ENCODE measurements at regions of chr15 and their contacts with region 1.

Region 1: DNA sequence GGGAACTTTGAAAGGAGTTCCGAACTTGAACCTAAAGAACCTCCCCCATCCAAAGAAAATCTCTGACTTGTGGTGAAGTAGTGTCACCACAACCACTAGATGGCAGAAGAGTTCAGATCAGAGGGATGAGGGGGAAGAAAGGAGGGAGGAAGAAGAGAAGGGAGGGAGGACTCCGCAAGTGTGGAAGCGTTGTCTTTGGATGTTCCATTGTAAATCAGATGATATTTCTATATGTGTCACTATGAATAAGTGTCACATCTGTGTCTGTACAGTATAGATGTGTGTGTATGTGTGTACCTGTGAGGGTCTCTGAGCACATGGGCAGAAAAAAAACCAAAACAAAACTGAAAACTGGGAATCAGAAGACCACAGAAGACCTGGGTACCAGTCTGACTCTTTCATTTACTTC is 16.9 kb downstream of the SLC24A1 start:
- DNase-seq: peak in 1 of 5 donors; percentile 20
- ATAC-seq: peak; percentile 57 to 80 (median 76)
- H3K4me3 ChIP-seq: peak overlapping the region in 1 of 12 donors; percentile 10
- H3K27ac ChIP-seq: no peak overlapping the region
- H3K4me1 ChIP-seq: peaks cover 0 to 14% (median 7%) of the 10 kb centered on the region in 12 donors
- H3K27me3 ChIP-seq: no peaks in the 10 kb centered on the region
- CTCF ChIP-seq: peak; percentile 64 to 87 (median 74)
- POLR2A ChIP-seq: no peak

Region 2: DNA sequence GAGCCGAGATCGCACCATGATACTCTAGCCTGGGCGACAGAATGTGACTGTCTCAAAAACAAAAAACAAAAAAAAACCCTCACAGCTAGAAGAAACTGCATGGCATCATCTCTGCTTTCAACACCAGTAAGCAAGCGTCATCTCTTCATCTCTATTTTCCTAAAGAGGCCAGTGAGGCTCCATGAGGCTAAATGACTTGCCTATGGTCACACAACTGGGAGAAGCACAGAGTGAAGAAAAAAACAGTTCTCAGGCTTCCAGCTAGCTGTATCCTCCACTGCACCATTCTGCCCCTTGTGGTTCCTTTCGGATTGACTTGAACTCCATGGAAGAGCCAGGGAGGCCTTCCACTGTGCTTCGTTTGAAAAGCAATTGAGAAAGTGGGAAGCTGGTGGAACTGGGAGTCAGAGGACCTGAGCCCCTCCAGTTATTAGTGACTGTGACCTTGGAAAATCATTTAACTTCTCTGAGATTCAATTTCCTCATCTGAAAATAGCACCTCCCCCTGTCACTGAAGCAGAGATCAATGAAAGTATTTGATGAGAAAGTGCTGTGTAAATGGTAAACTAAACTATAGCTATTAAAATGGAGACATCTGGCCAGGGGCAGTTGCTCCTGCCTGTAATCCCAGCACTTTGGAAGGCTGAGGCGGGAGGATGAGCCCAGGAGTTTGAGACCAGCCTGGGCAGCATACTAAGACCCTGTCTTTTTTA is 185.5 kb after region 1 on chr15:
- intact Hi-C with region 1: loop called in 3 of 10 experiments (anchors 10 kb)
- DNase-seq: peak in 3 of 5 donors; percentile 36 to 55 (median 39)
- ATAC-seq: peak in 3 of 4 donors; percentile 81 to 97 (median 92)
- H3K4me3 ChIP-seq: no peak overlapping the region
- H3K27ac ChIP-seq: no peak overlapping the region
- H3K4me1 ChIP-seq: peaks cover 0 to 51% (median 0%) of the 10 kb centered on the region in 12 donors
- H3K27me3 ChIP-seq: no peaks in the 10 kb centered on the region
- CTCF ChIP-seq: peak; percentile 24 to 79 (median 52)
- POLR2A ChIP-seq: no peak

Region 3: GRCh38 chr15:65856821-65857455 is 218.3 kb after region 1 on chr15:
- intact Hi-C with region 1: loop called in 6 of 10 experiments (anchors 2 to 10 kb)
- DNase-seq: peak; percentile 47 to 73 (median 58)
- ATAC-seq: peak in 3 of 4 donors; percentile 42 to 61 (median 49)
- H3K4me3 ChIP-seq: no peak overlapping the region
- H3K27ac ChIP-seq: no peak overlapping the region
- H3K4me1 ChIP-seq: peaks cover 0 to 4% (median 0%) of the 10 kb centered on the region in 12 donors
- H3K27me3 ChIP-seq: no peaks in the 10 kb centered on the region
- CTCF ChIP-seq: peak; percentile 69 to 88 (median 80)
- POLR2A ChIP-seq: no peak

Region 4: DNA sequence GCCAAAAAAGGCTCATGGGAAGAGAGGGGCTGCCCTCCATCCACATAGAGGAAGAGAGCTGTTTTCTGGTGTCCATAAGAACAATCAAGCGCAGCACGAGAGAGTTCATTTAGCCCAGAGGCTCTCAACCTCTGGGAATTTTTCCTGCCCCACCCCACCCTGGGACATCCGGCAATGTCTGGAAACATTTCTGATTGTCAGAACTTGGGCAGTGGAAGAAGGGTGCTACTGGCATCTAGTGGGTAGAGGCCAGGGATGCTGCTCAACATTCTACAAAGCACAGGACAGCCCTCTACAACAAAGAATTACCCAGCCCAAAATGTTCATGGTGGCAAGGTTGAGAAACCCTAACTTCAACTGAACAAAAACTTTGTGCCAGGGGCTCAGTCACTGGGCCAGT is 323.5 kb after region 1 on chr15:
- intact Hi-C with region 1: loop called in 1 of 10 experiments (anchors 5 kb)
- DNase-seq: no peak
- ATAC-seq: peak in 3 of 4 donors; percentile 36 to 62 (median 40)
- H3K4me3 ChIP-seq: no peak overlapping the region
- H3K27ac ChIP-seq: no peak overlapping the region
- H3K4me1 ChIP-seq: no peaks in the 10 kb centered on the region
- H3K27me3 ChIP-seq: peaks cover 0 to 42% (median 0%) of the 10 kb centered on the region in 9 donors
- CTCF ChIP-seq: peak in 8 of 12 donors; percentile 7 to 39 (median 22)
- POLR2A ChIP-seq: no peak

Region 5: GRCh38 chr15:66287461-66288057 is 648.9 kb after region 1 on chr15:
- intact Hi-C with region 1: loop called in 5 of 10 experiments (anchors 2 to 10 kb)
- DNase-seq: no peak
- ATAC-seq: no peak
- H3K4me3 ChIP-seq: no peak overlapping the region
- H3K27ac ChIP-seq: no peak overlapping the region
- H3K4me1 ChIP-seq: peaks cover 0 to 11% (median 5%) of the 10 kb centered on the region in 12 donors
- H3K27me3 ChIP-seq: no peaks in the 10 kb centered on the region
- CTCF ChIP-seq: peak; percentile 35 to 76 (median 62)
- POLR2A ChIP-seq: no peak

Measured in heart left ventricle (tissue), 16 donors.